PC-3 (cell line): ENCODE measurements at regions of chr12 and their contacts with region 1.

Region 1: DNA sequence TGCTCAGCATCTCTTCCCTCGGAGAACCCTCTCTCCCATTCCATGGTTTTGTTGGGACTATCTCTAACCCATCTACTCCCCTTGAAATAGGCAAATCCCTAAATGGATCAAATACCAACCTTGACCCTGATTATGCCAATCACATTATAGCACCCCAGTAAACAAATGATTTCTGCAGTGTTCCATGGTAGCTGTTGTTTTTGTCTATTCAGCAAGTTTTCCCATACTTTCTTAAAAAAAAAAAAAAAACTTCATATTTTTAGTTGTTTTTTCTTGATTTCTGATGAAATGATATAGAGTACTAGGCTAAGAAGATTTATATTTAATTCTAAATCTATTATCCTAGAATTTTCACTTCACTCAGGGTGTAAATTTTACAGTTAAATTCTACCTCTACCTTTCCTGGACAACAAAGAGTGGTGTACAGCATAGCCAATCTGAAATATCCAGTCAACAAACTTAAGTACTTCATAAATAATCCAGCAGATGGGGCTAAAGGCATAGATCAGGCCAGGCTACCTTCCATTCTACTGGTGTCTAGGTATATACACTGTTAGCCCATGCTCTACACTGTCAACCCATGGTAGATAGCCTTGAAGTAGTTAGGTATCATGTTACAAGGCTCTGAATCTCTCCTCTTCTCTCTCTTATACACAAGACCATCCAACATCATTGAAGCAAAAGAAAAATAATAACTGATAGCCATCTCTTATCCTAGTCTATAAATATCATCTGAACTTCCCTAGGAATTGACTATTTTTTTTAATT is 82.2 kb downstream of the PLEKHG7 start:
- DNase-seq: peak; percentile 90
- ATAC-seq: peak; percentile 99
- H3K4me3 ChIP-seq: no peak overlapping the region
- H3K27ac ChIP-seq: no peak overlapping the region
- H3K4me1 ChIP-seq: no peaks in the 10 kb centered on the region
- H3K27me3 ChIP-seq: no peaks in the 10 kb centered on the region
- CTCF ChIP-seq: peak; percentile 78

Region 2: GRCh38 chr12:92928962-92929915 is 144.3 kb after region 1 on chr12 and contains the start of gene EEA1:
- CTCF ChIA-PET with region 1: interaction called, 4 read pairs
- POLR2A ChIA-PET with region 1: interaction called, 4 read pairs
- intact Hi-C with region 1: loop called (anchors 1 kb)
- DNase-seq: peak; percentile 96
- ATAC-seq: peak; percentile 85
- H3K4me3 ChIP-seq: peak within 1 kb of the TSS; percentile 82
- H3K27ac ChIP-seq: peak within 1 kb of the TSS; percentile 74
- H3K4me1 ChIP-seq: peaks cover 24% of the 10 kb centered on the region
- H3K27me3 ChIP-seq: no peaks in the 10 kb centered on the region
- CTCF ChIP-seq: no peak
- total RNA-seq, gene EEA1: 7.9 and 11.9 TPM in 2 replicates

Region 3: GRCh38 chr12:92987362-92987761 is 202.4 kb after region 1 on chr12:
- CTCF ChIA-PET with region 1: interaction called, 5 read pairs
- POLR2A ChIA-PET with region 1: no interaction called
- intact Hi-C with region 1: loop called (anchors 1 kb)
- DNase-seq: peak; percentile 87
- ATAC-seq: peak; percentile 77
- H3K4me3 ChIP-seq: no peak overlapping the region
- H3K27ac ChIP-seq: no peak overlapping the region
- H3K4me1 ChIP-seq: peaks cover 7% of the 10 kb centered on the region
- H3K27me3 ChIP-seq: no peaks in the 10 kb centered on the region
- CTCF ChIP-seq: peak; percentile 79

Region 4: GRCh38 chr12:93397412-93397811 is 612.4 kb after region 1 on chr12:
- CTCF ChIA-PET with region 1: no interaction called
- POLR2A ChIA-PET with region 1: no interaction called
- intact Hi-C with region 1: loop called (anchors 2 kb)
- DNase-seq: no peak
- ATAC-seq: no peak
- H3K4me3 ChIP-seq: no peak overlapping the region
- H3K27ac ChIP-seq: no peak overlapping the region
- H3K4me1 ChIP-seq: no peaks in the 10 kb centered on the region
- H3K27me3 ChIP-seq: no peaks in the 10 kb centered on the region
- CTCF ChIP-seq: no peak